AG04450 (cell line): ENCODE measurements at regions of chr17 and their contacts with region 1.

Region 1: GRCh38 chr17:62808196-62808930 is at the start of gene MARCHF10:
- DNase-seq: no peak
- H3K4me3 ChIP-seq: peak within 1 kb of the TSS; percentile 29
- H3K27ac ChIP-seq: no peak within 1 kb of the TSS
- H3K27me3 ChIP-seq: no peaks in the 10 kb centered on the region
- CTCF ChIP-seq: no peak
- polyA plus RNA-seq, gene MARCHF10: 0.14 and 0.25 TPM in 2 replicates

Region 2: GRCh38 chr17:62882878-62883277 is 74.5 kb after region 1 on chr17:
- CTCF ChIA-PET with region 1: interaction called, 11 read pairs
- POLR2A ChIA-PET with region 1: no interaction called
- DNase-seq: no peak
- H3K4me3 ChIP-seq: no peak overlapping the region
- H3K27ac ChIP-seq: no peak overlapping the region
- H3K27me3 ChIP-seq: no peaks in the 10 kb centered on the region
- CTCF ChIP-seq: no peak